A673 (cell line): ENCODE measurements at regions of chr16 and their contacts with region 1.

Region 1: GRCh38 chr16:84065536-84066132 is 23.0 kb upstream of the SLC38A8 start:
- DNase-seq: peak; percentile 70
- H3K4me3 ChIP-seq: no peak overlapping the region
- H3K27ac ChIP-seq: no peak overlapping the region
- H3K4me1 ChIP-seq: no peaks in the 10 kb centered on the region
- H3K27me3 ChIP-seq: no peaks in the 10 kb centered on the region
- CTCF ChIP-seq: peak; percentile 80

Region 2: DNA sequence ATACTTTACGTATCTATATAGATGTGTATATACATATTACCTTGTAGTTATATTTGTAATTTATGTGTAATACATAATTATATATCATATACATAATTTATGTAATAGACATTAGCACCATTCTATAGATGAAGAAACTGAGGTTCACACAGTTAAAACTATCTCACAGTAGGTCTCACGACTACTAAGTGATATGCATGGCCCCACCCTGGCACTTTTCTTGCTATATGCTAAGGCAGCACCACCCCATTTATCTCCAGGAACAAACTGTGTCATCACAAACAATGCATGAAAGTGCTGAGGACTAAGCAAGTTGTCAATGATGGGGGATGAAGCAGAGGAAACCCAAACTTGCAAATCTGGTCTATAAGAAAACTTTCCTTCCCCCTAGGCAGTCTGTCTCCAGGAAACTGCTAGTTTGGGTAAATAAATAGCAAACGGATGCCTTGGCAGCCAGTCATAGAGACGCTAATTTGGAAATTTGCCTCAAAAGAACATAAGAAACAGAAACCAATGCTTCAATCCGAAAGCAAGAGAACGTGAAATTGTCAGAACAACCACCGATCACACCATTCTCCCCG is 263.6 kb before region 1 on chr16:
- CTCF ChIA-PET with region 1: no interaction called
- POLR2A ChIA-PET with region 1: no interaction called
- intact Hi-C with region 1: no loop called
- DNase-seq: peak; percentile 11
- H3K4me3 ChIP-seq: peak overlapping the region; percentile 13
- H3K27ac ChIP-seq: no peak overlapping the region
- H3K4me1 ChIP-seq: no peaks in the 10 kb centered on the region
- H3K27me3 ChIP-seq: peaks cover 42% of the 10 kb centered on the region
- CTCF ChIP-seq: no peak

Region 3: DNA sequence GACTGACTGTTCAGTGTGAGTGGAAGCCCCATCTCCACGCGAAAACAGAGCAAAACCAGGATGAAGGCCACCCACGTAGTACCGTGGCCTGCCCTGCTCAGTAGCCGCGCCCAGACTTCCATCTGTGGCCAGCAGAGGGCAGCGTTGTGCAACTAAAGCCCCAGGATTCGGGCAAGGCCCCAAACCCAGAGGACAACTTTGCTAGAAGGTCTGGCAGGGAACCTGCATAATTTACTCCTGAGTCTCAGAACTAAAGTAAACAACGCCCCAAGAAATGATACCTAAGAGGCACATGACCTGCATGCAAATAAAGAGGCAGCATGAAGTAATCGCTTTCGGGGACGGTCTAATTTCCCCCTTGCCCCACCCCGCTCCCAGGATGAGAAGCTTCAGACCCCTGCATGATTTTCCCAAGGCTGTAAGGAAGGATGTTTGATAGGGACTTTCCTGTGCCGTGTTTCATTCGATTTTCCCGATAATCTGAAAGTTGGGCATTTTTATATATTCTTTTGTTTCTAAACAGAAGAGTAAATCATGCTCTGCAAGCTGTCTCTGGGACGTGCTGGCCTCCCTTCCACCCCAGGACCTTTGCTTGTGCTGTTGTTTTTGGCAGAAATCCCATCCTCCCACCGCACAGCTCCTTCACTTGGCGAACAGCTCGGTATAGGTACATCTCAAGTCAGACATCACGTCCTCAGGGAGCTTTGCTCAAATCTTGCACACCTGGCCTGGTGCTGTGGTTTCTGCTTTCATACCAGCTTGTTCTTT is 239.3 kb before region 1 on chr16:
- CTCF ChIA-PET with region 1: no interaction called
- POLR2A ChIA-PET with region 1: no interaction called
- intact Hi-C with region 1: loop called (anchors 2 kb)
- DNase-seq: peak; percentile 82
- H3K4me3 ChIP-seq: no peak overlapping the region
- H3K27ac ChIP-seq: no peak overlapping the region
- H3K4me1 ChIP-seq: no peaks in the 10 kb centered on the region
- H3K27me3 ChIP-seq: peaks cover 5% of the 10 kb centered on the region
- CTCF ChIP-seq: peak; percentile 93

Region 4: GRCh38 chr16:83952940-83953795 is 112.5 kb before region 1 on chr16 and contains the start of gene OSGIN1:
- CTCF ChIA-PET with region 1: interaction called, 11 read pairs
- POLR2A ChIA-PET with region 1: no interaction called
- intact Hi-C with region 1: loop called (anchors 1 kb)
- DNase-seq: peak; percentile 86
- H3K4me3 ChIP-seq: peak within 1 kb of the TSS; percentile 40
- H3K27ac ChIP-seq: peak within 1 kb of the TSS; percentile 22
- H3K4me1 ChIP-seq: peaks cover 22% of the 10 kb centered on the region
- H3K27me3 ChIP-seq: no peaks in the 10 kb centered on the region
- CTCF ChIP-seq: no peak
- total RNA-seq, gene OSGIN1: 1.2 and 2.4 TPM in 2 replicates

Region 5: DNA sequence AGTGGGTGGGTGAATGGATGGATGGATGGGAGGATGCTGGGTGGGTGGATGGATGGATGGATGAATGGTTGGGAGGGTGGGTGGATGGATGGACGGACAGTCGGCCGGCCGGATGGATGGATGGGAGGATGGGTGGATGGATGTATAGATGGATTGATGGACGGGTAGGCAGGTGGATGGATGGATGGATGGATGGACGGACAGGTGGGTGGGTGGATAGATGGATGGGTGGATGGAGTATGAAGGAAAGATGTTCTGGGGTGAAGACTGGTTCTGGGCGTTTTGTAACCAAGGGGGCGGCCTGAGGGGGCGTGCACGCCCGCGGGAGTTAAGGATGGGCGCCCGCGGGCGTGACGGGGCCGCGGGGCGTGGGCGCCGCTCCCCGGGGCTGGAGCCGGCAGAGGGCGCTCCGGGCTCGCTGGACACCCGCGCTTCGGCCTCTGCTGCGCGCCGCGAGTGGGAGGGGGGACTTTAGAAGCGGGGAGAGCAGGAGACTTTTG is 97.8 kb before region 1 on chr16 and contains the start of gene NECAB2:
- CTCF ChIA-PET with region 1: no interaction called
- POLR2A ChIA-PET with region 1: no interaction called
- intact Hi-C with region 1: loop called (anchors 1 kb)
- DNase-seq: peak; percentile 54
- H3K4me3 ChIP-seq: peak within 1 kb of the TSS; percentile 29
- H3K27ac ChIP-seq: no peak within 1 kb of the TSS
- H3K4me1 ChIP-seq: no peaks in the 10 kb centered on the region
- H3K27me3 ChIP-seq: peaks cover 7% of the 10 kb centered on the region
- CTCF ChIP-seq: peak; percentile 59
- total RNA-seq, gene NECAB2: 0.76 and 0.80 TPM in 2 replicates

Region 6: GRCh38 chr16:84186685-84187437 is 121.2 kb after region 1 on chr16 and contains the start of gene TAF1C:
- CTCF ChIA-PET with region 1: no interaction called
- POLR2A ChIA-PET with region 1: no interaction called
- intact Hi-C with region 1: no loop called
- DNase-seq: peak; percentile 96
- H3K4me3 ChIP-seq: peak within 1 kb of the TSS; percentile 99
- H3K27ac ChIP-seq: peak within 1 kb of the TSS; percentile 86
- H3K4me1 ChIP-seq: peaks cover 4% of the 10 kb centered on the region
- H3K27me3 ChIP-seq: no peaks in the 10 kb centered on the region
- CTCF ChIP-seq: peak; percentile 98
- total RNA-seq, gene TAF1C: 58.0 and 58.4 TPM in 2 replicates